Natural killer cell (primary cell): ENCODE measurements at regions of chr15 and their contacts with region 1.

Region 1: DNA sequence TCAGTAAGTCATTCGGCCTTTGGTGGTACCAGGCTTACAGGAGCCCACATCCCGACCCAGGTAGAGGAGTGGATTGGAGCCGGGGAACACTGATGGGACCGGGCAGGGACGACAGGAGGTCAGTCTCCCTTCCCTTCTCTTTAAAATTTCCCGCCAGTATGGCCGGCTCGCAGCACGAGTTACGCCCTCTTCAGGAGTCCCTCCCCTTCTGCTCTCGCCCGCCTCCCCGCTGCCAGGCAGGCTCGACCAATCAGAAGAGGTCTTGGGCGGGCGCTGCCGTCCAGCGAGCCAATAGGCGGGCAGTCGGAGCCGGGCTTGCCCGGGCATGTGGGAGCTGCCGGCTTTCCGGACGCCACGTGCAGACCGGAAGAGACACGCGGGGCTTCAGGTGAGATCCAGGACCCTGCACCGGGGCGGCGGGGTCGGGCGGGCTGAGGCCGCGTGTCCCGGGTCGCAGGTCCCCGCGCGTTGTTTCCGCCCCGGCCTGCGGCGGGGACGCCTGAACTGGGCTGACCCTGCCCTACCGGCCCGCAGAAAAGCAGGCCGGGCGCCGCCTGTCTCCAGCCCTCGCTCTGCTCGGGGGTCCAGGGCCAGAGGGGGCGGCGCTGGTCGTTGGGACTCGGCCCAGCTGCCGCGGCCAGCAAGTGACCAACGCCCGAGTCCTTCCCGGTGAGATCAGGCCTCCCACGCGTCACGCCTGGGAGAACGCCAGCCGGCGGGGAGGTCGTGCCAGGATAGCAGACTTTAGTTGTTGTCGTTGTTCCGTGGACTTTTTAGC is at the start of gene AEN:
- DNase-seq: peak; percentile 96
- ATAC-seq: peak; percentile 95 to 98 (median 98)
- H3K4me3 ChIP-seq: peak within 1 kb of the TSS; percentile 58
- H3K4me3 Mint-ChIP-seq: peak within 1 kb of the TSS; percentile 92
- H3K27ac ChIP-seq: peak within 1 kb of the TSS; percentile 70
- H3K27ac Mint-ChIP-seq: peak within 1 kb of the TSS; percentile 78 to 89
- H3K4me1 ChIP-seq: peaks cover 48% of the 10 kb centered on the region
- H3K4me1 Mint-ChIP-seq: peaks cover 31 to 41% of the 10 kb centered on the region in 2 donors
- H3K27me3 ChIP-seq: no peaks in the 10 kb centered on the region
- H3K27me3 Mint-ChIP-seq: peaks cover 13 to 27% of the 10 kb centered on the region in 2 donors
- CTCF ChIP-seq: no peak
- total RNA-seq, gene AEN: 19.9 to 26.9 (median 20.9) TPM

Region 2: GRCh38 chr15:88638626-88639372 is 17.6 kb after region 1 on chr15 and contains the start of gene ISG20:
- intact Hi-C with region 1: loop called (anchors 1 kb)
- DNase-seq: peak; percentile 93 to 99
- ATAC-seq: peak; percentile 80 to 95 (median 88)
- H3K4me3 ChIP-seq: peak within 1 kb of the TSS; percentile 70
- H3K4me3 Mint-ChIP-seq: peak within 1 kb of the TSS; percentile 92
- H3K27ac ChIP-seq: peak within 1 kb of the TSS; percentile 96
- H3K27ac Mint-ChIP-seq: peak within 1 kb of the TSS; percentile 97 to 98
- H3K4me1 ChIP-seq: peaks cover 79% of the 10 kb centered on the region
- H3K4me1 Mint-ChIP-seq: peaks cover 58 to 63% of the 10 kb centered on the region in 2 donors
- H3K27me3 ChIP-seq: no peaks in the 10 kb centered on the region
- H3K27me3 Mint-ChIP-seq: no peaks in the 10 kb centered on the region
- CTCF ChIP-seq: peak; percentile 38
- total RNA-seq, gene ISG20: 80.6 to 137 (median 116) TPM

Region 3: DNA sequence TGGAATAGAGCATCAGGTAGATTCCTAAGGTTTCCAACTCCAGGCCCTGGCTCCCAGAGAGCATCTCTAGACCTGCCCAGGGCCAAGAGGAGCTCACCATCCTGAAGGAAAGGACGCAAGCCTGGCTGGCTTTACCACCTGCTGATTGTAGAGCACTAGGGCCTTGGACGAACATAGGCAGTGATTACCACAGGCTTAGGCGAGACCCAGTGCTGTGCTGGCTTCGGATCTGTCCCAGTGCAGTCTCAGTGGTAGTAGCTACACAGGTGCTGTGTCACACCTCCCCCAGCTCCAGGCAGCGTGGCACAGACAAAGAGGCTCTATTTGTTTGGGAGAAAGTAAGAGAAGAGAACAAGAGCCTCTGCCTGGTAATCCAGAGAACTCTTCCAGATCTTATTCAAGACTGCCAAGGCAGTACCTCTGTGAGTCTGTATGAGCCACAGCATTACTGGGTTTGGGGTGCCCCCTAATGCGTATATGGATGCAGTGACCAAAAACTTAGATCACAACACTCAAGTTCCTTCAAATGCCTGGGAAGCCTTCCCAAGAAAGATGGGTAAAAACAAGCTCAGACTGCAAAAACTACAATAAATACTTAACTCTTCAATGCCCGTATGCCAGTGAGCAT is 43.1 kb after region 1 on chr15:
- intact Hi-C with region 1: loop called (anchors 1 kb)
- DNase-seq: peak in 1 of 2 donors; percentile 81
- ATAC-seq: peak; percentile 70 to 80 (median 73)
- H3K4me3 ChIP-seq: no peak overlapping the region
- H3K4me3 Mint-ChIP-seq: no peak overlapping the region
- H3K27ac ChIP-seq: no peak overlapping the region
- H3K27ac Mint-ChIP-seq: peak overlapping the region in 1 of 2 donors; percentile 7
- H3K4me1 ChIP-seq: no peaks in the 10 kb centered on the region
- H3K4me1 Mint-ChIP-seq: peaks cover 0 to 7% of the 10 kb centered on the region in 2 donors
- H3K27me3 ChIP-seq: no peaks in the 10 kb centered on the region
- H3K27me3 Mint-ChIP-seq: peaks cover 8% of the 10 kb centered on the region in 2 donors
- CTCF ChIP-seq: peak; percentile 38

Region 4: GRCh38 chr15:88904624-88905327 is 283.6 kb after region 1 on chr15:
- intact Hi-C with region 1: loop called (anchors 5 kb)
- DNase-seq: peak; percentile 74 to 97
- ATAC-seq: peak; percentile 87 to 95 (median 90)
- H3K4me3 ChIP-seq: no peak overlapping the region
- H3K4me3 Mint-ChIP-seq: no peak overlapping the region
- H3K27ac ChIP-seq: peak overlapping the region; percentile 54
- H3K27ac Mint-ChIP-seq: no peak overlapping the region
- H3K4me1 ChIP-seq: peaks cover 15% of the 10 kb centered on the region
- H3K4me1 Mint-ChIP-seq: peaks cover 7 to 14% of the 10 kb centered on the region in 2 donors
- H3K27me3 ChIP-seq: no peaks in the 10 kb centered on the region
- H3K27me3 Mint-ChIP-seq: no peaks in the 10 kb centered on the region
- CTCF ChIP-seq: peak; percentile 98

Region 5: GRCh38 chr15:89017370-89018066 is 396.3 kb after region 1 on chr15:
- intact Hi-C with region 1: loop called (anchors 5 kb)
- DNase-seq: peak; percentile 74 to 92
- ATAC-seq: peak; percentile 85 to 97 (median 93)
- H3K4me3 ChIP-seq: no peak overlapping the region
- H3K4me3 Mint-ChIP-seq: peak overlapping the region; percentile 80
- H3K27ac ChIP-seq: no peak overlapping the region
- H3K27ac Mint-ChIP-seq: peak overlapping the region; percentile 44 to 61
- H3K4me1 ChIP-seq: peaks cover 12% of the 10 kb centered on the region
- H3K4me1 Mint-ChIP-seq: peaks cover 8 to 11% of the 10 kb centered on the region in 2 donors
- H3K27me3 ChIP-seq: no peaks in the 10 kb centered on the region
- H3K27me3 Mint-ChIP-seq: peaks cover 27 to 54% of the 10 kb centered on the region in 2 donors
- CTCF ChIP-seq: peak; percentile 68